ENCODE measurements at regions of chr11 and their contacts with region 1.

Region 1: DNA sequence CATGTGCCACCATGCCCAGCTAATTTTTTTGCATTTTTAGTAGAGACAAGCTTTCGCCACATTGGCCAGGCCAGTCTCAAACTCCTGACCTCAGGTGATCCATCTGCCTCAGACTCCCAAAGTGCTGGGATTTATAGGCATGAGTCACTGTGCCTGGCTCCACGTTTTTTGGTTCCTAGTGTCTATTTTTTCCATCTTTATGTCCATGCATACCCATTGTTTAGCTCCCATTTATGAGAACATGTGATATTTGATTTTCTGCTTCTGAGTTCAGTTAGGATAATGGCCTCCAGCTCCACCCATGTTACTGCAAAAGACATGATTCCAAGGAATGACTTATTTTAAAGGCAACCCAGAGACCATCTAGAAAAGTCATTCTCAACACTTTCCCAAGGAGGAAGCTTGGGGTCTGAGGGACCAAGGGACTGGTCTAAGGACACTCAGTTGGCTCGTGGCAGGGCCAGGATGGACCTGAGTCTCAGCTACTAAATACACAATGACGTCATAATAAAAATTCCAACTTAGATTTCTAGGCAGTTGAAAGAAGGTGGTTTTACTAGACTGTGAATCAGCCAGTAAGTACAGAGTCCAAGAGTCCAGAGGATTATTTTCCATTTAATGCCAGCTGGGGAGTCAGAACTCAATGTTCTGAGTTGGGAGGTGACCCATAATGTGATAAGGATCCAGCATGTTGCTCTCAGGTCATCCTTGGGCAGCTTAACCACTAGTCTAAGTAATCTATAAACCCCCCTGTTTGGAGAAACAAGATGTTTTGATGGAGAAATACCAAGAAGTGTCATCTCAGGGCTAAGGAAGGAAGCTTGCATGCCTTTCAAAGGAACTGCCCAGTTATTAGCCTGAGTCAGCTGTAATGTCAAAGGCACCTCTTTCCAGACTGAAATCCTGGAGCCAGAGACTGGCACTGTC is 39.4 kb downstream of the ABTB2 start:
- DNase-seq: no peak
- H3K4me3 Mint-ChIP-seq: no peak overlapping the region
- H3K27ac Mint-ChIP-seq: peak overlapping the region; percentile 7
- H3K4me1 Mint-ChIP-seq: peaks cover 14% of the 10 kb centered on the region
- H3K27me3 Mint-ChIP-seq: no peaks in the 10 kb centered on the region
- CTCF ChIP-seq: no peak

Region 2: GRCh38 chr11:34234086-34234740 is 84.2 kb before region 1 on chr11:
- CTCF ChIA-PET with region 1: interaction called, 11 read pairs
- intact Hi-C with region 1: no loop called
- DNase-seq: peak; percentile 81
- H3K4me3 Mint-ChIP-seq: peak overlapping the region; percentile 14
- H3K27ac Mint-ChIP-seq: peak overlapping the region; percentile 73
- H3K4me1 Mint-ChIP-seq: peaks cover 30% of the 10 kb centered on the region
- H3K27me3 Mint-ChIP-seq: no peaks in the 10 kb centered on the region
- CTCF ChIP-seq: no peak

Region 3: DNA sequence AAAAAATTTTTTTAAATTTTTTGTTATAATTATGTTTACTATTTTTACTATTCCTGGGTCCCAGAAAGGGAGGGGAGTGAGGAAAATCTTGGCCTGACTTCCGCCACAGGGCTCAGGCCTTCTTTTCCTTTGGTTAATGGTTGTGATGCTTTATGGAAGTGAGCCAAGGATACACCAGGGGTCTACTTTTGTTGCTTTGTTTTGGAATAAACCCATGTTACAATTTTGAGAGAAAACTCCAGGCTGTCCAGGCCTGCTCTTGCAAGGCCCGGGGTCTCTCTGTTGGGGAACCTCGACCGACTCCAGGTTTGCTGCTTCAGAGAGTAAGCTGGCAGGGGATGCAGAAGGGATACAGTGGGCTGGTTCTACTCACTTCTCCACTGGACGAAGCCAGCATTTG is 45.3 kb before region 1 on chr11:
- CTCF ChIA-PET with region 1: no interaction called
- intact Hi-C with region 1: no loop called
- DNase-seq: no peak
- H3K4me3 Mint-ChIP-seq: no peak overlapping the region
- H3K27ac Mint-ChIP-seq: no peak overlapping the region
- H3K4me1 Mint-ChIP-seq: peaks cover 24% of the 10 kb centered on the region
- H3K27me3 Mint-ChIP-seq: no peaks in the 10 kb centered on the region
- CTCF ChIP-seq: no peak

Region 4: GRCh38 chr11:34501500-34501899 is 183.1 kb after region 1 on chr11:
- CTCF ChIA-PET with region 1: no interaction called
- intact Hi-C with region 1: no loop called
- DNase-seq: no peak
- H3K4me3 Mint-ChIP-seq: no peak overlapping the region
- H3K27ac Mint-ChIP-seq: no peak overlapping the region
- H3K4me1 Mint-ChIP-seq: no peaks in the 10 kb centered on the region
- H3K27me3 Mint-ChIP-seq: no peaks in the 10 kb centered on the region
- CTCF ChIP-seq: no peak

Measured in Calu3 (cell line).